Caco-2 (cell line): ENCODE measurements at regions of chr4 and their contacts with region 1.

Region 1: GRCh38 chr4:74539044-74539790 is 94.3 kb downstream of the AREG start:
- DNase-seq: peak in 1 of 2 experiments; percentile 51
- H3K4me3 ChIP-seq: no peak overlapping the region
- H3K4me3 Mint-ChIP-seq: peak overlapping the region; percentile 22
- H3K27ac Mint-ChIP-seq: peak overlapping the region; percentile 8
- H3K4me1 ChIP-seq: peaks cover 100% of the 10 kb centered on the region
- H3K4me1 Mint-ChIP-seq: peaks cover 54% of the 10 kb centered on the region
- H3K27me3 ChIP-seq: no peaks in the 10 kb centered on the region
- H3K27me3 Mint-ChIP-seq: no peaks in the 10 kb centered on the region
- CTCF ChIP-seq: no peak

Region 2: DNA sequence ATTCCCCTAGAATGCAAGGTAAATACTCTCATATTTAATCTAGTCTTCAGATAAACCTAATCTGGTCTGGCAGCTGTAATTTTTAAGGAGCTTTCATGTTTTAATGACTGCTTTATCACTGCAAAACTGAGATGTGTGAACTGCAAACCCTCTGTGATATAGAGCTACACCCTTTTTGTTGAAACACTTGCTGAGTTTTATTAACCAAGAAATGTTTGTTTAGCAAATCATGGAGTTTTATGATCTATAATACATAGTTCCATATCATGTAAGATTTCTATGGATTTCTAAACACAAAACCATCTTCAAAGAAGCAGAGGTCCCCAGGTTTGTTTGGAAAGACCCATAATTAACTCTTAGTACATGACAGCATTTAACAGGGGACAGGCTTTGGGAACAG is 128.7 kb after region 1 on chr4:
- CTCF ChIA-PET with region 1: interaction called, 9 read pairs
- POLR2A ChIA-PET with region 1: no interaction called
- intact Hi-C with region 1: loop called (anchors 1 kb)
- DNase-seq: peak in 1 of 2 experiments; percentile 57
- H3K4me3 ChIP-seq: no peak overlapping the region
- H3K4me3 Mint-ChIP-seq: peak overlapping the region; percentile 2
- H3K27ac Mint-ChIP-seq: peak overlapping the region; percentile 67
- H3K4me1 ChIP-seq: peaks cover 75% of the 10 kb centered on the region
- H3K4me1 Mint-ChIP-seq: peaks cover 78% of the 10 kb centered on the region
- H3K27me3 ChIP-seq: no peaks in the 10 kb centered on the region
- H3K27me3 Mint-ChIP-seq: no peaks in the 10 kb centered on the region
- CTCF ChIP-seq: no peak

Region 3: GRCh38 chr4:74682567-74683359 is 143.5 kb after region 1 on chr4:
- CTCF ChIA-PET with region 1: no interaction called
- POLR2A ChIA-PET with region 1: no interaction called
- intact Hi-C with region 1: no loop called
- DNase-seq: peak; percentile 24 to 54
- H3K4me3 ChIP-seq: no peak overlapping the region
- H3K4me3 Mint-ChIP-seq: no peak overlapping the region
- H3K27ac Mint-ChIP-seq: no peak overlapping the region
- H3K4me1 ChIP-seq: peaks cover 8% of the 10 kb centered on the region; the same call in 1 of the 2 replicates
- H3K4me1 Mint-ChIP-seq: no peaks in the 10 kb centered on the region
- H3K27me3 ChIP-seq: no peaks in the 10 kb centered on the region
- H3K27me3 Mint-ChIP-seq: peaks cover 8% of the 10 kb centered on the region
- CTCF ChIP-seq: no peak

Region 4: DNA sequence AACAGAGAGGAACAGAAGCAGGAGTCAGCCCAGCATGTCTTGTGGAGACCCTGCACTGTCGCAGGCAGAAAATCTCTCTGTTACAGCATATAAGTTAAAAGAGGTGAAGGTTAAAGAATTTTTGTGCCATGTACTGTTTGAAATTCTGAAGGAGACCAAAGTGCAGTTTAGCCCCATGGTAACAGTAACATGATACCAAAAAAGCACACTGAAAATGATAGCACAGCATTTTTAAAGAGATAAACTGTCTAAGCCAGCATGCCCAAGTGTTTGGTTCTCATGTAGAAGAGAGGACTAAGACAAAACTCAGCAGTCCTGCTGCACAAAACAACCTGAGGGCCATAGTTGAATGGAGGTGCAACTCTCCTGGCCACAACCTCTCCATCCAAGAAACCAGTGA is 351.8 kb after region 1 on chr4:
- CTCF ChIA-PET with region 1: no interaction called
- POLR2A ChIA-PET with region 1: no interaction called
- intact Hi-C with region 1: no loop called
- DNase-seq: no peak
- H3K4me3 ChIP-seq: no peak overlapping the region
- H3K4me3 Mint-ChIP-seq: no peak overlapping the region
- H3K27ac Mint-ChIP-seq: no peak overlapping the region
- H3K4me1 ChIP-seq: no peaks in the 10 kb centered on the region
- H3K4me1 Mint-ChIP-seq: no peaks in the 10 kb centered on the region
- H3K27me3 ChIP-seq: no peaks in the 10 kb centered on the region
- H3K27me3 Mint-ChIP-seq: peaks cover 22% of the 10 kb centered on the region
- CTCF ChIP-seq: no peak